ENCODE measurements at regions of chr4 and their contacts with region 1.

Region 1: GRCh38 chr4:55948726-55949474 is at the start of gene CEP135:
- DNase-seq: peak; percentile 80 to 95
- H3K4me3 ChIP-seq: peak within 1 kb of the TSS; percentile 80 to 84 (median 82)
- H3K27ac ChIP-seq: peak within 1 kb of the TSS; percentile 81
- H3K4me1 ChIP-seq: peaks cover 0 to 2% (median under 1%) of the 10 kb centered on the region in 4 experiments; a peak in 4 of 7 replicates
- H3K27me3 ChIP-seq: no peaks in the 10 kb centered on the region
- CTCF ChIP-seq: peak; percentile 87 to 96 (median 90)
- EP300 ChIP-seq: no peak
- POLR2A ChIP-seq: peak in 1 of 2 experiments; percentile 90; a peak in 2 of 3 replicates
- RAD21 ChIP-seq: peak; percentile 80 to 81
- total RNA-seq, gene CEP135: 12.4 and 14.5 TPM in 2 replicates

Region 2: GRCh38 chr4:55409468-55410171 is 539.3 kb before region 1 on chr4:
- CTCF ChIA-PET with region 1: no interaction called
- POLR2A ChIA-PET with region 1: no interaction called
- DNase-seq: no peak
- H3K4me3 ChIP-seq: no peak overlapping the region
- H3K27ac ChIP-seq: no peak overlapping the region
- H3K4me1 ChIP-seq: peaks cover 0 to 3% (median under 1%) of the 10 kb centered on the region in 4 experiments; a peak in 2 of 7 replicates
- H3K27me3 ChIP-seq: no peaks in the 10 kb centered on the region
- CTCF ChIP-seq: peak in 2 of 3 experiments; percentile 39 to 46; a peak in 3 of 4 replicates
- EP300 ChIP-seq: no peak
- POLR2A ChIP-seq: no peak
- RAD21 ChIP-seq: peak; percentile 62 to 75

Region 3: GRCh38 chr4:55931833-55932232 is 17.1 kb before region 1 on chr4:
- CTCF ChIA-PET with region 1: interaction called, 18 read pairs
- POLR2A ChIA-PET with region 1: interaction called, 5 read pairs
- DNase-seq: no peak
- H3K4me3 ChIP-seq: no peak overlapping the region
- H3K27ac ChIP-seq: no peak overlapping the region
- H3K4me1 ChIP-seq: peaks cover 0 to 2% (median under 1%) of the 10 kb centered on the region in 4 experiments; a peak in 1 of 7 replicates
- H3K27me3 ChIP-seq: no peaks in the 10 kb centered on the region
- CTCF ChIP-seq: no peak
- EP300 ChIP-seq: no peak
- POLR2A ChIP-seq: no peak
- RAD21 ChIP-seq: no peak